ENCODE measurements at regions of chr15 and their contacts with region 1.

Region 1: DNA sequence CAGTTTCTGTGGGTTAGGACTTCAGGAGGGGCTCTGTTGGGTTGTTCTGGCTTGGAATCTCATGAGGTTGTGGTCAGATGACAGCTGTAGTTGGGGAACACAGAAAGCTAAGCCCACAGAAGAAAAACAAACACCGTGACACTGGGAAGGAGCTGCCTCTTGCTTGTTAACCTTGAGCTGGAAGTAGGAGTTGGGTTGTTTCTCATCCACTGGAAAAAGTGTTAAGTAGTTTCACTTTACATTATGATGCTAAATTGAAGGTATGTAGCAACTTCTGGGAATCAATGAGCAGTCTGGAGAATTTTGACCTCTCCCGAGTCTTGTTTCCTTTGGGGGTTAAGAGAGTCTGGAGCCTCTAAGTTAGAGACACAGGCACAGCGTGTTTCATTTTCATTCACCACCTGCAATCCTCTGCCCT is 20.4 kb downstream of the HACD3 start:
- DNase-seq: peak in 2 of 4 experiments; percentile 29 to 38
- ATAC-seq: peak; percentile 74
- H3K4me3 ChIP-seq: no peak overlapping the region
- H3K27ac ChIP-seq: peak overlapping the region; percentile 58
- H3K4me1 ChIP-seq: peaks cover 4 to 25% of the 10 kb centered on the region in 2 experiments; a peak in 3 of 5 replicates
- H3K27me3 ChIP-seq: no peaks in the 10 kb centered on the region
- CTCF ChIP-seq: no peak
- EP300 ChIP-seq: no peak
- POLR2A ChIP-seq: no peak
- RAD21 ChIP-seq: no peak

Region 2: GRCh38 chr15:64305261-64305660 is 1245.4 kb before region 1 on chr15:
- CTCF ChIA-PET with region 1: no interaction called
- POLR2A ChIA-PET with region 1: no interaction called
- in situ Hi-C with region 1: no loop called
- intact Hi-C with region 1: no loop called
- DNase-seq: no peak
- ATAC-seq: no peak
- H3K4me3 ChIP-seq: no peak overlapping the region
- H3K27ac ChIP-seq: no peak overlapping the region
- H3K4me1 ChIP-seq: no peaks in the 10 kb centered on the region
- H3K27me3 ChIP-seq: no peaks in the 10 kb centered on the region
- CTCF ChIP-seq: no peak
- EP300 ChIP-seq: no peak
- POLR2A ChIP-seq: no peak
- RAD21 ChIP-seq: no peak

Region 3: GRCh38 chr15:65512807-65513416 is 37.8 kb before region 1 on chr15:
- CTCF ChIA-PET with region 1: no interaction called
- POLR2A ChIA-PET with region 1: interaction called, 3 read pairs
- in situ Hi-C with region 1: no loop called
- intact Hi-C with region 1: loop called (anchors 2 kb)
- DNase-seq: peak in 2 of 4 experiments; percentile 26 to 67
- ATAC-seq: peak; percentile 38
- H3K4me3 ChIP-seq: no peak overlapping the region
- H3K27ac ChIP-seq: peak overlapping the region; percentile 71
- H3K4me1 ChIP-seq: peaks cover 6 to 27% of the 10 kb centered on the region in 2 experiments
- H3K27me3 ChIP-seq: no peaks in the 10 kb centered on the region
- CTCF ChIP-seq: no peak
- EP300 ChIP-seq: no peak
- POLR2A ChIP-seq: 0 out of 2 replicates have a peak, but pooled peaks have one; percentile 34
- RAD21 ChIP-seq: no peak

Measured in K562 (cell line).